PC-9 (cell line): ENCODE measurements at regions of chr2 and their contacts with region 1.

Region 1: GRCh38 chr2:219294356-219295351 is 14.5 kb downstream of the PTPRN start:
- DNase-seq: peak; percentile 65 to 91
- H3K4me3 ChIP-seq: peak overlapping the region; percentile 61; the same call in 1 of the 2 replicates
- H3K27ac ChIP-seq: no peak overlapping the region
- H3K4me1 ChIP-seq: peaks cover 7% of the 10 kb centered on the region
- H3K27me3 ChIP-seq: peaks cover 7% of the 10 kb centered on the region
- CTCF ChIP-seq: peak; percentile 87

Region 2: DNA sequence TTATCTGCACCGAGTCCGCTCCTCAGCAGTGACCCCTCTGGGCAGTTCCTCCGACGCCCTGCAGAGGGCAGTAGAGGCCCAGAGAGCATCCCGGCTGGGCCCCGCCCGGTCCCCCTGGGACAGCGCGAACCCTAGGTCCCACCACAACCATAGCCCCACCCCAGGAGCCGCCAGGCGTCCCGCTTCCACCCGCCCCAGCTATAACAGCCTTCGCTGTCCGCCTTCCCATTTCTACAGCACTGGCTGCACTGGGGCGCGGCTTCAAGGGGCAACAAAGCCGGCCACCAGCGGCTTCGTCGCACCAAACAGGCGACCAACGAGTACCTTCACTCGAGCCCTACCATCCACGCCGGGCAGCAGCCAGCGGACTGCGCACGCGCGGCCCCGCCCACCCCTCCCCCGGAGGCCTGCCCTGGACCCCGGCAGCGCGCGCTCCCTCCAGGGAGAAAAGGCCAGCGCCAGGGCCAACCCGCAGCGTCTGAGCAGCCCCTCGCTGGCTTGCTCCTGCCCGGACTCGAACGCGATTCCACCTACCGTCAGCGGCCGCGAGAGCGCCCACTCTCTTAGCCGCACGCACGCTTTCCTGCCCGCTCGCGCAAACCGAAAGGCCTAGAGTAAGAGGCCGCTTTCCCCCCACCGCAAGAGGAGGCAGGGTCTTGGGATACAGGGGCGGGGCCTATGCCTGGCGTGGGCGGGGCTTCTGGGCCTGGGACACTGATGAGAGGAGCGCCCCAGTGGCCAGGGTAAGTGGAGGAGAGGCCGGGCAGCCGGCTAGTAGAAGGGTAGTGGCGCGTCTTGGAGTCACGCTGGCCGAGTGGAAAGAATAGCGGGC is 134.3 kb before region 1 on chr2 and contains the start of gene NHEJ1:
- CTCF ChIA-PET with region 1: no interaction called
- POLR2A ChIA-PET with region 1: no interaction called
- intact Hi-C with region 1: loop called (anchors 1 kb)
- DNase-seq: peak; percentile 79 to 95
- H3K4me3 ChIP-seq: peak within 1 kb of the TSS; percentile 72
- H3K27ac ChIP-seq: peak within 1 kb of the TSS; percentile 57
- H3K4me1 ChIP-seq: 0 out of 2 replicates have a peak, but pooled peaks cover 8% of the 10 kb centered on the region
- H3K27me3 ChIP-seq: no peaks in the 10 kb centered on the region
- CTCF ChIP-seq: peak; percentile 96
- total RNA-seq, gene NHEJ1: 9.8 and 11.2 TPM in 2 replicates

Region 3: GRCh38 chr2:219177552-219178376 is 116.9 kb before region 1 on chr2 and contains the start of gene RETREG2:
- CTCF ChIA-PET with region 1: interaction called, 10 read pairs
- POLR2A ChIA-PET with region 1: interaction called, 3 read pairs
- intact Hi-C with region 1: loop called (anchors 2 kb)
- DNase-seq: peak; percentile 81 to 86
- H3K4me3 ChIP-seq: peak within 1 kb of the TSS; percentile 95
- H3K27ac ChIP-seq: peak within 1 kb of the TSS; percentile 77
- H3K4me1 ChIP-seq: peaks cover 19% of the 10 kb centered on the region
- H3K27me3 ChIP-seq: no peaks in the 10 kb centered on the region
- CTCF ChIP-seq: no peak
- total RNA-seq, gene RETREG2: 77.0 and 84.4 TPM in 2 replicates

Region 4: GRCh38 chr2:219229305-219230058 is 65.2 kb before region 1 on chr2 and contains the starts of genes ANKZF1 and ATG9A:
- CTCF ChIA-PET with region 1: interaction called, 5 read pairs
- POLR2A ChIA-PET with region 1: no interaction called
- intact Hi-C with region 1: loop called (anchors 1 kb)
- DNase-seq: peak; percentile 97 to 98
- H3K4me3 ChIP-seq: peak within 1 kb of the TSS; percentile 67
- H3K27ac ChIP-seq: peak within 1 kb of the TSS; percentile 77
- H3K4me1 ChIP-seq: peaks cover 16% of the 10 kb centered on the region
- H3K27me3 ChIP-seq: no peaks in the 10 kb centered on the region
- CTCF ChIP-seq: no peak
- total RNA-seq, gene ANKZF1: 62.2 and 65.1 TPM in 2 replicates
- total RNA-seq, gene ATG9A: 56.0 and 64.5 TPM in 2 replicates

Region 5: GRCh38 chr2:219278655-219279516 is 15.8 kb before region 1 on chr2 and contains the start of gene DNAJB2:
- CTCF ChIA-PET with region 1: interaction called, 13 read pairs
- POLR2A ChIA-PET with region 1: no interaction called
- intact Hi-C with region 1: loop called (anchors 1 kb)
- DNase-seq: peak; percentile 90 to 98
- H3K4me3 ChIP-seq: peak within 1 kb of the TSS; percentile 81
- H3K27ac ChIP-seq: peak within 1 kb of the TSS; percentile 51
- H3K4me1 ChIP-seq: peaks cover 42% of the 10 kb centered on the region
- H3K27me3 ChIP-seq: no peaks in the 10 kb centered on the region
- CTCF ChIP-seq: no peak
- total RNA-seq, gene DNAJB2: 38.5 and 47.5 TPM in 2 replicates

Region 6: DNA sequence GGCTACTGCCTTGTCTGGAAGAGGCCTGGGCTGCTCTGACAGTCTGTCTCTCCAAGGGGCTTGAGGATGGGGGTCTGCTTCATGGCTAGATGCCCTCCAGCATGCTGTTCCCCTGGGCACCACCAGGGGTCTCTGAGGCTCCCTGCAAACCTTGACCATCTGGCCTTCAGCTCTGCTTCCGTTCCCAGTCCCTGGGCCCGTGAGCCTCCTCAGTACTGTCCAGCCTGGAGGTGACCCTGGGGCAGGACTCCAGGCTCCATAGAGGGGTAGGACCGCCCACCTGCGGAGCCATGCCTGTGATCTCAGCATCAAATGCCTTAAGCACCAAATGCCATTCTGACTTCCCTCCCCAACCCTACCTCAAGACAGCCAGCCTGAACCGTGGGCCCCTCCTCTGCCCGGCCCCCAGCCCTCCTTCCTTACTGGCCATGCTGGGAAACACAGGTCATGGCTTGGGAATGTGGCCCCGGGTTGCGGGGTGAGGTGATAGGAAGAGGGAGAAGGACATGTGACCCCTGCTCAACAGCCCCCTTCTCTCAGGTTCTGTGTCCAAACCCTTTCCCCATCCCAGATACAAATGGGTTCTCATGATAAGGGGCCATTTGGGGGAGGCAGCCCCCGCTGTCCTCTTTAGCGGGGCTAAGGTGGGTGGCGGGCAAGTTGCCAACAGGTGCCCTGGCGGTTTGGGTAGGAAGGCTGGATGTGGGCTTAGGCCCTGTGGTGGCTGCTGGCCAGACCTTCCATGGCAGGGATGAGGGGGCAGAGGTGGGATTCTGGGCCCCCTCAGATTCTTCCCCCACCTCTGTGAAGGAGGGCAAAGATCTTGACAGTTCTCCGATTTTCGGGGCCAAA is 165.0 kb after region 1 on chr2:
- CTCF ChIA-PET with region 1: interaction called, 10 read pairs
- POLR2A ChIA-PET with region 1: no interaction called
- intact Hi-C with region 1: no loop called
- DNase-seq: peak in 1 of 2 experiments; percentile 50
- H3K4me3 ChIP-seq: no peak overlapping the region
- H3K27ac ChIP-seq: no peak overlapping the region
- H3K4me1 ChIP-seq: peaks cover 27% of the 10 kb centered on the region
- H3K27me3 ChIP-seq: no peaks in the 10 kb centered on the region
- CTCF ChIP-seq: peak; percentile 91

Region 7: DNA sequence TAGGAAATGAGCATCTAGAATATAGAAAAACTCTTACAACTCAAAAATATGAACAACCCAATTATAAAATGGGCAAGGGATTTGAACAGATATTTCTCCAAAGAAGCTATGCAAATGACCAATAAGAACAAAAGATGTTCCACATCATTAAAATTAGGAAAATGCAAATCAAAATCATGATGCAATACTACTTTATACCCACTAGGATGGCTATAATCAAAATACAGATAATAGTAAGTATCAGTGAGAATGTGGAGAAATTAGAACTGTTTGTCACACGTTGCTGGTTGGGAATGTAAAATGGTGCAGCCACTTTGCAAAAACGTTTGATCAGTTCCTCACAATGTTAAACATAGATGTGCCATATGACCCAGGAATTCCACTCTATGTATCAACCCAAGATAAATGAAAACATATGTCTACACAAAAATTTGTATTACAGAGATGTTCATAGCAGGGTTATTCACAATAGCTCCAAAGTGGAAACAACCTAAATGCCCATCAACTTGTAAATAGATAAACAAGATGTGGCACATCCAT is 891.2 kb after region 1 on chr2:
- CTCF ChIA-PET with region 1: no interaction called
- POLR2A ChIA-PET with region 1: no interaction called
- intact Hi-C with region 1: no loop called
- DNase-seq: no peak
- H3K4me3 ChIP-seq: no peak overlapping the region
- H3K27ac ChIP-seq: no peak overlapping the region
- H3K4me1 ChIP-seq: peaks cover 5% of the 10 kb centered on the region; the same call in 1 of the 2 replicates
- H3K27me3 ChIP-seq: no peaks in the 10 kb centered on the region
- CTCF ChIP-seq: no peak